B cell (primary cell): ENCODE measurements at regions of chr9 and their contacts with region 1.

Region 1: GRCh38 chr9:137672907-137673791 is 54.3 kb downstream of the EHMT1 start:
- DNase-seq: peak; percentile 85
- ATAC-seq: peak; percentile 97
- H3K4me3 ChIP-seq: no peak overlapping the region
- H3K4me3 Mint-ChIP-seq: peak overlapping the region; percentile 59
- H3K27ac ChIP-seq: peak overlapping the region; percentile 44 to 61
- H3K27ac Mint-ChIP-seq: peak overlapping the region; percentile 86
- H3K4me1 ChIP-seq: peaks cover 29 to 35% of the 10 kb centered on the region in 2 donors
- H3K4me1 Mint-ChIP-seq: peaks cover 57% of the 10 kb centered on the region
- H3K27me3 ChIP-seq: no peaks in the 10 kb centered on the region
- H3K27me3 Mint-ChIP-seq: no peaks in the 10 kb centered on the region
- CTCF ChIP-seq: peak; percentile 87

Region 2: DNA sequence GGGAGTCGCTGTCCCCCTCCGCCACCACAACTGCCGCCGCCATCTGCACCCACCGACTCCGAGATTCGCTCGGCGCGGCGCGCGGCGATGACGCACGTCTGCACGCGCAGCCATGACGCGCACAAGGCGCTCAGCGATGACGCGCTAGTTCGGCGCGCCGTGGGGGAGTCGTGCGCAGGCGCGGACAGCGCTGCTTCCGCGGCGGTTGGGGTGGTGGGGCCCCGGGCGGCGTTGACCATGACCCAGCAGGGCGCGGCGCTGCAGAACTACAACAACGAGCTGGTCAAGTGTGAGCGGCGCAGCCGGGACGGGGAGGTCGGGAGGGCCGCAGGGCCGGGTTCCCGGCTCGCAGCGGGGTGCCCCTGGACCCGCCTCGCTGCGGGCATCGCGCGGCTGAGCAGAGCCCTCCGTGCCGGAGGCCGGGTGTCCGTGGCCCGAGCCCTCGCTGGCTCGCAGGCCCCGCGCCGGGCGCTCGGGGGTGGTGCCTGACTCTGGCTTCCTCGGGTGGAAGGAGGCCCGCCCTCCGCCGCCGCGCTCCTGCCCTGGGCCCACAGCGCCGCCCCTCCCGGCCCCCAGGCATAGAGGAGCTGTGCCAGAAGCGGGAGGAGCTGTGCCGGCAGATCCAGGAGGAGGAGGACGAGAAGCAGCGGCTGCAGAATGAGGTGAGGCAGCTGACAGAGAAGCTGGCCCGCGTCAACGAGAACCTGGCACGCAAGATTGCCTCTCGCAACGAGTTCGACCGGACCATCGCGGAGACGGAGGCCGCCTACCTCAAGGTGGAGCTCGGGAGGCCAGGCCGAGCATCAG is 484.5 kb before region 1 on chr9 and contains the starts of genes ANAPC2 and SSNA1:
- CTCF ChIA-PET with region 1: no interaction called
- POLR2A ChIA-PET with region 1: no interaction called
- intact Hi-C with region 1: no loop called
- DNase-seq: peak; percentile 97
- ATAC-seq: peak; percentile 84
- H3K4me3 ChIP-seq: peak within 1 kb of the TSS; percentile 50 to 99 (median 98)
- H3K4me3 Mint-ChIP-seq: peak within 1 kb of the TSS; percentile 96
- H3K27ac ChIP-seq: peak within 1 kb of the TSS; percentile 78 to 90
- H3K27ac Mint-ChIP-seq: peak within 1 kb of the TSS; percentile 97
- H3K4me1 ChIP-seq: peaks cover 26 to 40% of the 10 kb centered on the region in 2 donors
- H3K4me1 Mint-ChIP-seq: peaks cover 36% of the 10 kb centered on the region
- H3K27me3 ChIP-seq: no peaks in the 10 kb centered on the region
- H3K27me3 Mint-ChIP-seq: no peaks in the 10 kb centered on the region
- CTCF ChIP-seq: peak; percentile 49
- total RNA-seq, gene ANAPC2: 121 and 129 TPM in 2 replicates
- total RNA-seq, gene SSNA1: 52.9 and 53.6 TPM in 2 replicates

Region 3: GRCh38 chr9:137611623-137612463 is 61.3 kb before region 1 on chr9:
- CTCF ChIA-PET with region 1: no interaction called
- POLR2A ChIA-PET with region 1: no interaction called
- intact Hi-C with region 1: no loop called
- DNase-seq: no peak
- ATAC-seq: peak; percentile 55
- H3K4me3 ChIP-seq: no peak overlapping the region
- H3K4me3 Mint-ChIP-seq: peak overlapping the region; percentile 32
- H3K27ac ChIP-seq: no peak overlapping the region
- H3K27ac Mint-ChIP-seq: no peak overlapping the region
- H3K4me1 ChIP-seq: peaks cover 10 to 21% of the 10 kb centered on the region in 2 donors
- H3K4me1 Mint-ChIP-seq: peaks cover 20% of the 10 kb centered on the region
- H3K27me3 ChIP-seq: no peaks in the 10 kb centered on the region
- H3K27me3 Mint-ChIP-seq: no peaks in the 10 kb centered on the region
- CTCF ChIP-seq: no peak

Region 4: DNA sequence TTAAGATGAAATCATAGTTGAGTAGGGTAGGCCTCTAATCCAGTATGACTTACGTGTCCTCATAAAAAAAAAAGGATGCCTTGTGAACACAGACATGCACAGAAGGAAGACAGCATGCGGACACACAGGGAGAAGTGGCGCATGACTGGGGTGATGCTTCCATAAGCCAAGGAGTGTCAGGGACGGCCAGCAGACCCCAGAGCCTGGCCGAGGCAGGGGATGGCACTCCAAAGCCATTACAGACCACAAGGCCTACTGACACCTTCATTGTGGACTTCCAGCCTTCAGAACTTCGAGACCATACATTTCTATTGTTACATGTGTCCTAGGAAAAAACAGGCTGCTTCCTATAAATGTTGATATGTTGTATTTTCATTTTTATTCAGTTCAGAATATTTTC is 34.5 kb before region 1 on chr9:
- CTCF ChIA-PET with region 1: interaction called, 10 read pairs
- POLR2A ChIA-PET with region 1: no interaction called
- intact Hi-C with region 1: no loop called
- DNase-seq: no peak
- ATAC-seq: no peak
- H3K4me3 ChIP-seq: peak overlapping the region in 1 of 5 experiments; percentile 48
- H3K4me3 Mint-ChIP-seq: peak overlapping the region; percentile 47
- H3K27ac ChIP-seq: peak overlapping the region; percentile 18 to 79
- H3K27ac Mint-ChIP-seq: no peak overlapping the region
- H3K4me1 ChIP-seq: peaks cover 11 to 13% of the 10 kb centered on the region in 2 donors
- H3K4me1 Mint-ChIP-seq: peaks cover 43% of the 10 kb centered on the region
- H3K27me3 ChIP-seq: no peaks in the 10 kb centered on the region
- H3K27me3 Mint-ChIP-seq: no peaks in the 10 kb centered on the region
- CTCF ChIP-seq: no peak

Region 5: GRCh38 chr9:137705443-137706293 is 32.5 kb after region 1 on chr9:
- CTCF ChIA-PET with region 1: interaction called, 26 read pairs
- POLR2A ChIA-PET with region 1: no interaction called
- intact Hi-C with region 1: no loop called
- DNase-seq: peak; percentile 73
- ATAC-seq: peak; percentile 83
- H3K4me3 ChIP-seq: peak overlapping the region in 3 of 5 experiments; percentile 1 to 36 (median 25)
- H3K4me3 Mint-ChIP-seq: peak overlapping the region; percentile 83
- H3K27ac ChIP-seq: peak overlapping the region; percentile 41 to 65
- H3K27ac Mint-ChIP-seq: peak overlapping the region; percentile 97
- H3K4me1 ChIP-seq: peaks cover 38 to 52% of the 10 kb centered on the region in 2 donors
- H3K4me1 Mint-ChIP-seq: peaks cover 65% of the 10 kb centered on the region
- H3K27me3 ChIP-seq: no peaks in the 10 kb centered on the region
- H3K27me3 Mint-ChIP-seq: no peaks in the 10 kb centered on the region
- CTCF ChIP-seq: no peak

Region 6: DNA sequence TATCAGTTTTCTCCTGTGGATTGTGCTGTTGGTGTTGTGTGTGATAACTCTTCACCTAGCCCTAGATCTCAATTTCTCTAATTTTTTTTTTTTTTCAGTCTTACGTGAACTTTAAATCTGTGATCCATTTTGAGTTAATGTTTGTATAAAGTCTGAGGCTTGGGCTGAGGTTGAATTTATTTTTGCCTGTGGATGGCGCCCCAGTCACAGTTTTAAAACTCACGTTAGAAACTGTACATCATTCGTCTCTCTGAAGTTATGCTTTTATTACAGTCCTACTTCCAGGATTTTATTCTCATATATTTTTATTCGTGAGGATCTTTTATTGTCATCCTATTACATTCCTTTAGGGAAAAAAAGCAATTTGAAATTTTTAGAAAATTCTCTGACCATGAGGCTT is 48.8 kb after region 1 on chr9:
- CTCF ChIA-PET with region 1: interaction called, 10 read pairs
- POLR2A ChIA-PET with region 1: interaction called, 3 read pairs
- intact Hi-C with region 1: no loop called
- DNase-seq: peak; percentile 62
- ATAC-seq: no peak
- H3K4me3 ChIP-seq: no peak overlapping the region
- H3K4me3 Mint-ChIP-seq: peak overlapping the region; percentile 64
- H3K27ac ChIP-seq: peak overlapping the region in 1 of 2 donors; percentile 93
- H3K27ac Mint-ChIP-seq: peak overlapping the region; percentile 91
- H3K4me1 ChIP-seq: peaks cover 24 to 30% of the 10 kb centered on the region in 2 donors
- H3K4me1 Mint-ChIP-seq: peaks cover 40% of the 10 kb centered on the region
- H3K27me3 ChIP-seq: no peaks in the 10 kb centered on the region
- H3K27me3 Mint-ChIP-seq: no peaks in the 10 kb centered on the region
- CTCF ChIP-seq: peak; percentile 73

Region 7: GRCh38 chr9:137764981-137765380 is 91.8 kb after region 1 on chr9:
- CTCF ChIA-PET with region 1: interaction called, 18 read pairs
- POLR2A ChIA-PET with region 1: interaction called, 6 read pairs
- intact Hi-C with region 1: no loop called
- DNase-seq: no peak
- ATAC-seq: no peak
- H3K4me3 ChIP-seq: no peak overlapping the region
- H3K4me3 Mint-ChIP-seq: no peak overlapping the region
- H3K27ac ChIP-seq: no peak overlapping the region
- H3K27ac Mint-ChIP-seq: peak overlapping the region; percentile 89
- H3K4me1 ChIP-seq: peaks cover 33 to 36% of the 10 kb centered on the region in 2 donors
- H3K4me1 Mint-ChIP-seq: peaks cover 50% of the 10 kb centered on the region
- H3K27me3 ChIP-seq: no peaks in the 10 kb centered on the region
- H3K27me3 Mint-ChIP-seq: no peaks in the 10 kb centered on the region
- CTCF ChIP-seq: no peak